HepG2 (cell line): ENCODE measurements at regions of chr14 and their contacts with region 1.

Region 1: GRCh38 chr14:24843494-24843893 is 206.5 kb downstream of the STXBP6 start:
- DNase-seq: no peak
- ATAC-seq: no peak
- H3K4me3 ChIP-seq: no peak overlapping the region
- H3K27ac ChIP-seq: no peak overlapping the region
- H3K4me1 ChIP-seq: peaks cover 59% of the 10 kb centered on the region
- H3K27me3 ChIP-seq: no peaks in the 10 kb centered on the region
- CTCF ChIP-seq: no peak
- EP300 ChIP-seq: no peak
- POLR2A ChIP-seq: no peak
- RAD21 ChIP-seq: no peak

Region 2: DNA sequence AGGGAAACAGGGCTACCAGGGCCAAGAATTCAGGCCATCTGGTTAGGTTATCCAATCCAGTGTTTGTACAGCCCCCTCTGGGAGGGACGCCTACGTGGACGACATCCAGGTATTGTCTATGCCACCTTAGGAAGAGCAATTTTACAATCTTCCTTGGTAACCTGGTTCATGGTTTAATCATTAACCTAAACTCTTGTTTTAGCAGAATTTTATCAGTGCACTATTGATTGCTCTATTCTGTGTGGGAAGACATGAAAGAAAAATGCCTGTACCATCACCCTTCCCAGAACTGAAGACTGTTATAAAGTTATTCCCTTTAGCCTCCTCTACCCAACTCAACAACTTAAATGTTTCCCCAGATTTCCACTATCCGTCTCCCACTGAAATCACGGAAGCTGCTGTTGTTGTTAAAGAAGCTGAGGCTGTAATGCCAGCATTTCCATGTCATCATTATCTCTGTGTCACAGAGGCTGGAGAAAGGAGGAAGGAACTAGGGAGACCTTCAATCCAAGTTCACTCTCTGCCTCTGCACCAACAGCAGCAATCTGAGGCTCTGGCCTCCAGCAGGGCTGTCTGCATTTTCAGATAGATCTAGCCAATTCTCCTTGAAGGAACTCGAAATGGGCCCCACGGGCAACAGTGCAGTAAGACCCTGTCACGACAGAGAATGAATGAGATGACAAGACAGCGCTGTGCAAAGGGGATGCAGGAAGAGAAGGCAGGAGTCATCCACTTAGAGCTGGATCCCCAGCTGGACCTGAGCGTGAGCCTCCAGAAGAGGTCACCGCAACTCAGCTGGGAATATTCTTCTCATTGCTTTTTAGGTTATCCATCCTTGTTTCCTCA is 26.1 kb before region 1 on chr14:
- CTCF ChIA-PET with region 1: interaction called, 13 read pairs
- POLR2A ChIA-PET with region 1: interaction called, 380 read pairs
- in situ Hi-C with region 1: no loop called
- intact Hi-C with region 1: loop called (anchors 1 kb)
- DNase-seq: peak; percentile 98
- ATAC-seq: peak; percentile 57
- H3K4me3 ChIP-seq: peak overlapping the region; percentile 18 to 56 (median 35)
- H3K27ac ChIP-seq: peak overlapping the region; percentile 86
- H3K4me1 ChIP-seq: peaks cover 76% of the 10 kb centered on the region
- H3K27me3 ChIP-seq: no peaks in the 10 kb centered on the region
- CTCF ChIP-seq: peak; percentile 81
- EP300 ChIP-seq: peak in 1 of 2 experiments; percentile 88; a peak in 2 of 4 replicates
- POLR2A ChIP-seq: no peak
- RAD21 ChIP-seq: 0 out of 2 replicates have a peak, but pooled peaks have one; percentile 9

Region 3: DNA sequence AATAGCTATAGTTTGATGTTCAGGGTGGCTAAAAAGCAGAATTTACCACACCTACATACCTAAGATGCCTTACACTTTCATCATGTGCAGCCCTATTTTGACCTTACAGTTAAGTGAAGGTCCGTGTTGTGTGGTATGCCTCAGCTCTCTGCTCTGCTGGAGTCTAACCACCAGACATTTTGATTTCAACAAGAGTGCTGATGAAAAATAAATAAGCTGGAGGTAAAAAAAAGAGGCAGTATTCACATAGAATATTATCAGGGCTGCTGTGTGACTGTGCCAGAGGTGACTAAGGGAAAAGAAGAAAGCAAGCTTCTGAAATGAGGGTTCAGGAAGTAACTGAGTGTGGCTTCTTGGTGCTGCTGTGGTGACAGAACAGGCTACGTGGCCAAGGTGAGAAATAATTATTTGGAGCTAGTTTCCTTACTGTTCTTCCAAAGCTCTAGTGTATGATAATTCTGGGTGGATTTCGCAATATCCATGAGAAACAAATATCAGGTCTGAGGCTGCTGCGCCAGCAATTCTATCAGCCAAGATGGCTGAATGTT is 17.7 kb after region 1 on chr14:
- CTCF ChIA-PET with region 1: no interaction called
- POLR2A ChIA-PET with region 1: interaction called, 17 read pairs
- in situ Hi-C with region 1: no loop called
- intact Hi-C with region 1: no loop called
- DNase-seq: peak; percentile 43
- ATAC-seq: peak; percentile 66
- H3K4me3 ChIP-seq: no peak overlapping the region
- H3K27ac ChIP-seq: no peak overlapping the region
- H3K4me1 ChIP-seq: peaks cover 9% of the 10 kb centered on the region
- H3K27me3 ChIP-seq: no peaks in the 10 kb centered on the region
- CTCF ChIP-seq: no peak
- EP300 ChIP-seq: no peak
- POLR2A ChIP-seq: no peak
- RAD21 ChIP-seq: no peak

Region 4: DNA sequence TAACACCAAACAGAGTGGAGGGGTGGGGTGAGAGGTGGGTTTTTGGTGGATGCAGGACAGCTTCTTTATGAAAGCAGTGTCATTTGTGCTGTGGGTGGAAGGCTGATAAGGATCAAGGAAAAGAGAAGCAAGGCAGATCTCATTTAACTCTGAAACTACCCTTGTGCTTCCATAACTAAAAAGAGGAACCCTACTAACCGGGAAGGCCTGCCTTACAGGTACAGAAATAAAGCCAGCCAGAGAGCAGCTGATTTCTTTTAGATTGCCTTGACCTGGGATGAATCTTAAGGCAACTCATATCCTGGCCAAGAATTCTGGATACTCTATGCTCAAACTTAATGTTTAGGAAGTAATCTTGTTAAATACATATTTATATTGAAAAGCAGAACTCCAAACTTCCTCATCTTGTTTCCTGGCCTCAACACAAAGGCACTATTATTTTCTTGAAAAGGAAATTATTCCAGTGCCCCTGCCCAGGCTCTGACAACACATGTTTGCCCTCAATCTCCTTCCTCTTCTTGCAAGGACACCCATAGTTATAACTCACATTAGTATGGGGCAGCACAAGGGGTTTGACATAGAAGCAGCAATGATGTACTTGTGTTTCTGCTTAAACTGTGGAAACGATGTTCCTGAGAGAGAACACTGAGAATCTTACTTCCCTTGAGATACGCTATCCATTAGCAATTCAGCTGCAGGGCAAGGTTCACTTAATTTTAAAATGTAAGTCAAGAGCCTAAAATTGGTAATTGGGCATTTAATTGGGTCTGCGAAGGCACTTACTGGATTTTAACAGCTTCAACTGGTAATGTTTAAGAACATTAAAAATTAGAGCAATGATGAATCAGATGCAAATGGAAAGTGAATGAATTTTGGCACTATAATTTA is 32.7 kb after region 1 on chr14:
- CTCF ChIA-PET with region 1: no interaction called
- POLR2A ChIA-PET with region 1: interaction called, 24 read pairs
- in situ Hi-C with region 1: no loop called
- intact Hi-C with region 1: loop called (anchors 1 kb)
- DNase-seq: no peak
- ATAC-seq: no peak
- H3K4me3 ChIP-seq: no peak overlapping the region
- H3K27ac ChIP-seq: no peak overlapping the region
- H3K4me1 ChIP-seq: peaks cover 69% of the 10 kb centered on the region
- H3K27me3 ChIP-seq: no peaks in the 10 kb centered on the region
- CTCF ChIP-seq: no peak
- EP300 ChIP-seq: no peak
- POLR2A ChIP-seq: no peak
- RAD21 ChIP-seq: no peak

Region 5: DNA sequence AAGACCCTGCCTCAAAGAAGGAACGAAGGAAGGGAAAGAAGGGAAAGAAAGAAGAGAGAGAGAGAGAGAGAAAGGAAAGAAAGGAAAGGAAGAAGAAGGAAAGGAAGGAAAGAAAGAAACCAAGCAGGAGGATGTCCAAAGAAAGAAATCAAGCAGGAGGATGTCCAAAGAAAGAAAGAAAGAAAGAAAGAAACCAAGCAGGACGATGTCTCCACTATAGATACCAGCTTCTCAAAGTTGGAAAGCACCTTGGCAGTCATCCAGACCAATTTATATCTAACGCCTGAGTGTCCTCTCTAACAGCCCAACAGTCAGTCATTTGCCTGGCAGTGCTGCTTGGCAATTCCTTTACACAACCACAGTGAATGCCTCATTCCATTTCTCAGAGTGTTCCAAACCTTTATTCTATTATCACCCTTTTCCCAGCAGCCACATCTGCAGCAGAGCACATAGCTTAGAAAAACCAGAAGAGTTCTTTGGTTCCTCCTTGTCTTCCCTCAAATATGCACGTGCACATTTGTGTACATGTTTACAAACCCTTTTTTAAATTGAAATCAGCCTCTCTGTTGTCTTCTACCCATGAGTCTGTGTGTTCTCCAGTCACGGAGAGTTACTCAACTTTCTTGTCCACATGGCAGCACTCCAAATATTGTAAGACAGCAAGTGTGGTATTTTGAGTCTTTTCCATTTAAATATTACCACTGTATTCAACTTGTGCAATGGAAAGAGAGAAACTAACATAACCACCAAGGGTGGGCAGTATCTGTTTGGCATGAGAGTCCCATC is 68.0 kb after region 1 on chr14:
- CTCF ChIA-PET with region 1: no interaction called
- POLR2A ChIA-PET with region 1: interaction called, 29 read pairs
- in situ Hi-C with region 1: no loop called
- intact Hi-C with region 1: loop called (anchors 1 kb)
- DNase-seq: no peak
- ATAC-seq: no peak
- H3K4me3 ChIP-seq: no peak overlapping the region
- H3K27ac ChIP-seq: no peak overlapping the region
- H3K4me1 ChIP-seq: peaks cover 64% of the 10 kb centered on the region
- H3K27me3 ChIP-seq: no peaks in the 10 kb centered on the region
- CTCF ChIP-seq: no peak
- EP300 ChIP-seq: no peak
- POLR2A ChIP-seq: no peak
- RAD21 ChIP-seq: no peak

Region 6: DNA sequence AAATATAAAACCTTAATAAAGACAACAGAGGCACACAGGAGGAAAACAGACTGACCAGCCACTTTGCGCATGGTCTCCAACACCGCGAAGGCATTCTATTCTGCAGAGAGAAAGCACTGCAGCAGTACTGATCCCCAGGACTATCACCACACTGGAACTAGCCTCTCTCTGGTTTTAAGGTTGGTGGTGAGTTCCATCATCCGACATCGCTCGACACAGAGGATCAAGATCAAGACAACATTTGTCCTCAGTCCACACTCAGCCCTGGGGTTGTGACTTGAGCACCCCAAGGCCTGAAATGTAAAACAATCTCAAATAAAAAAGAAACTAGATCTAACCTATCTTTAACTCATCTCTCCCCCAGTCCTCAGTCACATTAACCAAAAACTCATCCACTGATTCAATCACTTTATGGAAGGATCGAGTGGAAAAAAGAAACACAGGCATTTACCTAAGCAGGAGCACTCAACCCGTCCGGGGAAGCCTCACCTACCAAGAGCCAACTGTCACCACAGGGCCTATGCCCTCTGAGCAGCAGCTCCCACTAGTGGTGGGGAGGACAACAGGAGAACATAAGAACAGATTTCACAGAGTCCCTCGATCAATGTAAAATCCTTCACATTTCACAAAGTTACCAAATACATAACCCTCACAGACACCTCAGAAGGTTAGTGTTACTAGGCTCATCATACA is 188.7 kb after region 1 on chr14:
- CTCF ChIA-PET with region 1: no interaction called
- POLR2A ChIA-PET with region 1: interaction called, 28 read pairs
- in situ Hi-C with region 1: no loop called
- intact Hi-C with region 1: loop called (anchors 1 kb)
- DNase-seq: peak; percentile 84
- ATAC-seq: peak; percentile 82
- H3K4me3 ChIP-seq: peak overlapping the region; percentile 25 to 62 (median 56)
- H3K27ac ChIP-seq: peak overlapping the region; percentile 6
- H3K4me1 ChIP-seq: peaks cover 48% of the 10 kb centered on the region
- H3K27me3 ChIP-seq: no peaks in the 10 kb centered on the region
- CTCF ChIP-seq: peak; percentile 94
- EP300 ChIP-seq: no peak
- POLR2A ChIP-seq: peak; percentile 31 to 46; a peak in 1 of 4 replicates
- RAD21 ChIP-seq: peak; percentile 88